Breast epithelium (tissue), 4 donors: ENCODE measurements at regions of chr1 and their contacts with region 1.

Region 1: DNA sequence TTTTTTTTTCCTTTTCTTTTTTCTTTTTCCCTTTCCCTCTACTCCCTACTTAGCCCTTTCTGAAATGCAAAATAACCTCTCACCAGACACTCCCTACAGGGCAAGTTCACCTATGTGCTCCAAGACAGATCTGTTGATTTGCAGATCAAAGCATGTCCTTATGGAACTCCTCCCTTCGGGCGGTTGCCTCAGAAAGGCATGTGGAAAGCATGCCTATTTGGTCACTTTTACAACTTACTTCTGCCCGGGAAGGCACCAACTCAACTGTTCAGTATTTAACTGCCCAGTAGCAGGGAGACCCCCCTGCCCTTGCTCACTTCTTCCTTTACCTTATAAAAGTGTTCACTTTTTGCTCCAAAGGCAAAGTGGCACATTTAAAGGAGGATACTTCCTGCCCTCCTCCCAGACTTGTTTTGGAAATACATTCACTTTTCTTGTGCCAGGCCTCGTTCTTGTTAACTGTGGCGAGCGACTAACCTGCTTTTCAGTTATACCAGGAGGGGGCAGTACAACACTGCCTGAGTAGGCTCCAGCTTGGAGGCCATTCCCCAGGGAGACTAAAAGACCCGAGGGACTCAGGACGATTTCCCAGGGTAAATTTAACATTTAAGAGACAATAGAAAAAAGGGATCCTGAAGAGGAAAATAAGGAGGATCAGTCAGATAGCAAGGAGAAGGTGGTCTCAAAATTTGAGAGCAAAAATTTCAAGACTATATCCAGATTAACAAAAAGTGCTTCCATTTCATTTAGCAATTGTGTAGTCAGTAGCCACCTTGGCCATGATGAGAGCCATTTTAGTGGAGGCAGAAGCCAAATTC is 12.3 kb upstream of the SLAMF7 start:
- DNase-seq: peak in 1 of 2 donors; percentile 45
- H3K4me3 ChIP-seq: no peak overlapping the region
- H3K27ac ChIP-seq: peak overlapping the region in 1 of 2 donors; percentile 30
- H3K4me1 ChIP-seq: peaks cover 0 to 7% of the 10 kb centered on the region in 2 donors
- H3K27me3 ChIP-seq: no peaks in the 10 kb centered on the region
- CTCF ChIP-seq: peak in 2 of 3 donors; percentile 67 to 72
- POLR2A ChIP-seq: no peak

Region 2: DNA sequence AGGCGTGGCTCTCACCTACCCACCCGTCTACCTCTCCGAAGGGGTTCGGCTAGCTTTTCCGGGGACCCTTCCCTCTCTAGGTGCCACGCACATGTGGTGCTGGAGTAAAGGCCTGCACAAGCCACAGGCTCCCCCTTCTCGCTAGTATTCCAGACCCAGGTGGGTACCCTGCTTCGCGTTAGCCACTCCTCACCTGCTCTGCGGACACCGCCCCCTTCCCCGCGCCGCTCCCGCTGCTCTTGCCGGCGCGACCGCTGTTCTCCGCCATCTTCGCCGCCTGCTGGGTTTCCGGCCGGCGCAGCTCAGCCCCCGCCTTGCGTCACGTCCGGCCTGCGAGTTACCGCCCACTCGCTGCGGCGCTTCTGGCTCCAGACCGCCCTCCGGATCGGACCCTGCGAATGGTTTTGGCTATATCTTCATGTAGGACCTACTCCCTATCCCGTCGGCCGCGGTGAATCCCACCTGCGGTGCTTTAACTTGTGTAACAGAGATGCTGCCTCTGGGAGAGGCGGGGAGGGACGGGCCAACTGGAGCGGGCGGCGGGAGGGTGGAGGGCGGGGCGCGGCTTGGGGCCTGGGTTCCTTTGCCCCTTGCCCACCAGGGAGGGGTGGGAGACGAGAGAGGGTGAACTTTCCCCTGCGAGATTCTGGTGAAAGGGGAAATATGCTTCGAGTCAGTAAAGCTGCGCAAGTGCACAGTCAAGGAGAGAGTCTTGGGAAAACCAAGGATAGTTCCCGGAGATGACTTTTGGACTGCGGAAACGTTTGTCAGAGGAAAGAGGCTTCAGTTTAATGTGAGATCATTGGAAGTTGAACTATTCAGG is 391.3 kb after region 1 on chr1 and contains the starts of genes NIT1 and PFDN2:
- intact Hi-C with region 1: loop called (anchors 10 kb)
- DNase-seq: peak; percentile 76 to 81
- H3K4me3 ChIP-seq: peak within 1 kb of the TSS; percentile 72 to 88 (median 79)
- H3K27ac ChIP-seq: peak within 1 kb of the TSS; percentile 87 to 95
- H3K4me1 ChIP-seq: peaks cover 8 to 25% of the 10 kb centered on the region in 2 donors
- H3K27me3 ChIP-seq: no peaks in the 10 kb centered on the region
- CTCF ChIP-seq: no peak
- POLR2A ChIP-seq: peak; percentile 86
- total RNA-seq, gene NIT1: 36.3 to 44.5 (median 37.0) TPM
- total RNA-seq, gene PFDN2: 32.5 to 50.1 (median 37.0) TPM